ENCODE measurements at regions of chr17 and their contacts with region 1.

Region 1: GRCh38 chr17:18038861-18039534 is at the starts of genes ATPAF2 and GID4:
- DNase-seq: peak; percentile 99
- ATAC-seq: peak; percentile 87
- H3K4me3 Mint-ChIP-seq: peak within 1 kb of the TSS; percentile 94
- H3K27ac Mint-ChIP-seq: peak within 1 kb of the TSS; percentile 92
- H3K4me1 Mint-ChIP-seq: peaks cover 54% of the 10 kb centered on the region
- H3K27me3 Mint-ChIP-seq: no peaks in the 10 kb centered on the region
- CTCF ChIP-seq: no peak
- total RNA-seq, gene ATPAF2: 60.7 and 69.1 TPM in 2 replicates
- total RNA-seq, gene GID4: 6.8 and 7.3 TPM in 2 replicates

Region 2: GRCh38 chr17:17356149-17356930 is 682.7 kb before region 1 on chr17:
- CTCF ChIA-PET with region 1: interaction called, 6 read pairs
- POLR2A ChIA-PET with region 1: no interaction called
- intact Hi-C with region 1: loop called (anchors 2 kb)
- DNase-seq: peak; percentile 42
- ATAC-seq: peak; percentile 88
- H3K4me3 Mint-ChIP-seq: no peak overlapping the region
- H3K27ac Mint-ChIP-seq: no peak overlapping the region
- H3K4me1 Mint-ChIP-seq: no peaks in the 10 kb centered on the region
- H3K27me3 Mint-ChIP-seq: peaks cover 3% of the 10 kb centered on the region
- CTCF ChIP-seq: peak; percentile 81

Region 3: DNA sequence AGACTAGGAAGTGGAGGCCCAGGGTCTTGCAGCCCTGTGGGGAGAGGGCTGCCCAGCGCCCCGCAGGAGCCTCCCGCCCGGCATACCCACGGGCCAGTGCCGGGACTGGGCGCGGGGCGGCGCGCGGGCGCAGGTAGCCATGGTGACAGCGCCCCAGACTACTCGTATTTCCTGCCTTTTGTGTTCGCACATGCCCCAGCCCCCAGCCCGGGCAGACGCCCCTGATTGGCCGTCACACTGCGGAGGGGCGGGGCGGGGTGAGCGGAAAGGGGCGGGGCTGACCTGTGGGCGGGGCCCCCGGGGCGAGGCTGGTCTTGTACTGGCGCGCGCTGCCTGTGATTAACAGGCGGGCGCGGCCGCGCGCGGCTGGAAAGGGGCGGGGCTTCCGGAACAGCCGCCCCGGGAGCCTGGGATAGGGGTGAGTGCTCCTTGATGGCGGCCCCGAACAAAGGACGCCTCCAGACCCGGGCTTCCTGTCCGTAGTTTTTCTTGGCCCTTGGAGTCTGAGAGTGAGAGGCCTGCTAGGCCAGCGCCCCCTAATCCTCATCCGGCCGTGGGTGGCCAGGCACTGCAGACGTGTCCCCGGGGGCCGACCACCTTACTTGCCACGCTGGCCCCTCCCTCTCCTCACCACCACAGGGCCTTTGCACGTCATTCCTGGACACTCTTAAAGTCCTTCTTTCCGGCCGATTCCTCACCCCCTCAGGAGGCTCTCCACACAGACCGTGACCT is 286.7 kb before region 1 on chr17:
- CTCF ChIA-PET with region 1: interaction called, 3 read pairs
- POLR2A ChIA-PET with region 1: no interaction called
- intact Hi-C with region 1: loop called (anchors 1 kb)
- DNase-seq: peak; percentile 93
- ATAC-seq: peak; percentile 85
- H3K4me3 Mint-ChIP-seq: peak overlapping the region; percentile 86
- H3K27ac Mint-ChIP-seq: peak overlapping the region; percentile 98
- H3K4me1 Mint-ChIP-seq: peaks cover 88% of the 10 kb centered on the region
- H3K27me3 Mint-ChIP-seq: no peaks in the 10 kb centered on the region
- CTCF ChIP-seq: no peak

Region 4: DNA sequence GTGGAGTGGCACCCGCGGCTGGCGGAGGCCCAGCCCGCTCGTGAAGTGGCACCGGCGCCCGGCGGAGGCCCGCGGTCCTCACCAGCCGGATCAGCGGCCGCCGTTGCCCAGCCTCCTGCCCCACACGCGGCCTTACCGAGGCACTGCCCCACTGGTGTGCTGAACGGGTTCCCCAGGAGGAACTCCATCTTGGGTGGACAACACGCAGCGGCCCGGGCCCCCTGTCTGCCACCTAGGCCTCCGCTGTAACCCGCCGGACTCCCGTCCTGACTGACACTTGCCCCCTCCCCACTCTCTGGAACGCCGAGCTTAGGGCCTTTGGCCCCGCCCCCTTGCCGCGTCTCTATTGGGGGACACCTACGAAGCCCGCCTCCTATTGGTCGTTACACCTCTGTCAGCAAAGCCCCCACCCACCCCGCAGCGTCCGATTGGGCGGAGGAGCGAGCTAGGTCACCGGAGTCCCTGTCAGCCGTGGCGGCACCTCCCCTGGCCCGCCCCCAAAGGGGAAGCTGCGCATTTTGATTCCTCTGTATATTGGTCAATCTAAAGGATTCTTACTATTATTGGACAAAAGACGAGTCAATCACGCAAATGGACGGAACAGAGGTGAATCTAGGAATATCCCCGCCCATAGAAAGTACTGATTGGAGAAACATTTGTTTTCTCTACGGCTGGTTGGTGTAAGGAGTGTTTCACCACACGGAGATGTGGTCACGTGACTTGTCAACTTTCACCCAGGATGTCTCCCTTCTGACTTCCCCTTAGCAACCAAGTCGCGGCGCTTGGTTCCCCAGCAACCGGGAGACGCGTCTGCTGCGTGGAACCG is 66.7 kb before region 1 on chr17 and contains the starts of genes DRC3 and TOM1L2:
- CTCF ChIA-PET with region 1: interaction called, 4 read pairs
- POLR2A ChIA-PET with region 1: interaction called, 7 read pairs
- intact Hi-C with region 1: loop called (anchors 1 kb)
- DNase-seq: peak; percentile 97
- ATAC-seq: peak; percentile 91
- H3K4me3 Mint-ChIP-seq: peak within 1 kb of the TSS; percentile 94
- H3K27ac Mint-ChIP-seq: peak within 1 kb of the TSS; percentile 87
- H3K4me1 Mint-ChIP-seq: peaks cover 22% of the 10 kb centered on the region
- H3K27me3 Mint-ChIP-seq: no peaks in the 10 kb centered on the region
- CTCF ChIP-seq: no peak
- total RNA-seq, gene DRC3: not detected in 2 replicates
- total RNA-seq, gene TOM1L2: 15.2 and 18.3 TPM in 2 replicates

Region 5: DNA sequence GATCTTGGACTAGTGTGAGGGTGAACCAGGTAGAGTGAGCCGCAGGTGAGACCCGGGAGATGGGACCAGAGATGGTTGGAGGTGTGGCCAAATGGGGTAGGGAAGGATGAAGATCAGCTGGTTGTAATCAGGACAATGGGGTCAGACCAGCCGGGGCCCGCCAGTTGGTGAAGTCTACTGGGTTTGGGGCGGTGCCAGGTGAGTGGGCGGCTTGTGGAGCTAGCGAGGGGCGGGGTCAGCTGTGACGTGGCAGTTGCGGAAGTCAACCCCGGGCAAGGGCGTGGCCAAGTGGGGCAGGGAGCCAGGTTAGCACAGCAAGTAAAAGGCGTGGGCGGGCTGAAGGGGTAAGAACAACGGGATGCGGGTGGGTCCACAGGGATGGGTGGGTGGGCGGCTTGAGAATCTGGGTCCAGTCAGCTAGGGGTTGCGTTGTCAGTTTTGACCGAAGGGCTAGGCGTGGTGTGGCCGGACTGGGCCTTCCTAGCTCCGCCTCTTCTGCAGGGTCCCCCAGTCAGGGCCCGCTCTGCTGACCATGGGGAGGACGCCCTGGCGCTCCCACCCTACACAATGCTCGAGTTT is 119.1 kb after region 1 on chr17:
- CTCF ChIA-PET with region 1: no interaction called
- POLR2A ChIA-PET with region 1: no interaction called
- intact Hi-C with region 1: loop called (anchors 5 kb)
- DNase-seq: peak; percentile 91
- ATAC-seq: peak; percentile 75
- H3K4me3 Mint-ChIP-seq: peak overlapping the region; percentile 89
- H3K27ac Mint-ChIP-seq: peak overlapping the region; percentile 85
- H3K4me1 Mint-ChIP-seq: peaks cover 23% of the 10 kb centered on the region
- H3K27me3 Mint-ChIP-seq: no peaks in the 10 kb centered on the region
- CTCF ChIP-seq: no peak

Region 6: DNA sequence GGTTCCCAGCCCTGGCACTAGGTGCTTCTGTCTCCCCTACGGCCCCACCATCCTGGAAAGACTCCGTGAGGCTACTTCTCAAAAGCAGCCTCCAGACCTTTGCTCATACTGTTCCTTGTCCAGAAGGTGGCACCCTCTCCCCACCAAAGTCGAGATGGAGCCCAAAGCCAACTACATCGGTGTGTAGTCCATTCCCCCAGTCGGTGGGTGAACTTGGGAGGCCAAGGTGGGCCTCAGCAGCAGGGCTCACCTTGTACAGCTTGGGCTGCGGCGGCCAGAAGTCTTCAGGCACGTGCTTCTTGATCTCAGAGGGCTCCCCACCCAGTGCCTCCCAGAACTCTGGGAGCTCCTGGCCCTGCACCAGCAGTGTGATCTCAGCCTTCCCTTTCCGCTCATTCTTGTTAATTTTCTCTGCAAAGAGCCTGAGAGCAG is 209.3 kb after region 1 on chr17:
- CTCF ChIA-PET with region 1: no interaction called
- POLR2A ChIA-PET with region 1: interaction called, 12 read pairs
- intact Hi-C with region 1: no loop called
- DNase-seq: peak; percentile 47
- ATAC-seq: peak; percentile 82
- H3K4me3 Mint-ChIP-seq: no peak overlapping the region
- H3K27ac Mint-ChIP-seq: no peak overlapping the region
- H3K4me1 Mint-ChIP-seq: peaks cover 6% of the 10 kb centered on the region
- H3K27me3 Mint-ChIP-seq: no peaks in the 10 kb centered on the region
- CTCF ChIP-seq: no peak

Measured in activated B cell treated with CpG ODN at 0.5 μM for 24 hours (primary cell).